ENCODE measurements at regions of chr16 and their contacts with region 1.

Region 1: DNA sequence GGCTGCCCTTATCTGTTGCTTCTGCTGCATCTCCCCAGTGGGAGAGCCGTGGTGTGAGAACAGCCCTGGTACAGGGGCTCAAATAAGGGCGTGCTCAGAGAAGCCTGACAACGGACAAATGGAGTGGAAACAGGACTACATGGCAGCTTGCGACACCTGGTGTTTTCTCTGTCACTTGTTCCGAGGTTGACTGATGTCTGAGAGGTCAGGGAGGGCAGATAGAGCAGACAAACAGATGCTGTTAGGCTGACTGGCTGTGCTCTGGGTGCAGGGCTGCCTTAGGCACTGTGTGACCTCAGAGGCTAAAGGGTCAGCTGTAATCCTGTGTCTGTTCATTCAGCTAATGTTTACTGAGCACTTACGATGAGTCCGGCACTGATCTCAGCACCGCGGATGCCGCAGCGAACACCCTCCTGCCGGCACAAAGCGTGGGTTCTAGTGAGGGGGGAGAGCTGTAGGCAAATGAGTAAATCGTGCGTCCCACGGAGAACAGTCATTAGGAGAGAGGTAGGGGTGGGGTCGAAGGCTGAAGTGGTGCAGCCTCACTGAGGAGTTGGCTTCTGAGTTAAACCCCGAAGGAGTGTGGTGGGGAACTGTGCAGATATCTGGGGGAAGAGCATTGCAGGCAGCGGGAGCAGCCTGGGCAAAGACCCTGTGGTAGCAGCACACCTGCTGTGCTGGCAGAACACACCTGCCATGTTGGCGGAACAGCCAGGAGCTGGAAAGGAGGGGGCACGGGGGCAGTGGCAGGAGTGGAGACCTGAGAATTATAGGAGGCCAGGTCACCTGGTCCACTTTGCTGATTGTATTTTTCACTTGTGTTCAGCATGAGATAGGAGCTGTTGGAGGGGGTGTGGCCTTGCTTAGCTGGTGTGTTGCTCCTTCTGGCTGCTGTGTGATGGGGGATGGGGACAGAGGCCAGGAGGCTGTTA is 35.0 kb downstream of the GPT2 start:
- DNase-seq: peak; percentile 34
- ATAC-seq: peak; percentile 60
- H3K4me3 Mint-ChIP-seq: peak overlapping the region; percentile 75
- H3K27ac Mint-ChIP-seq: peak overlapping the region; percentile 80
- H3K4me1 Mint-ChIP-seq: peaks cover 69% of the 10 kb centered on the region
- H3K27me3 Mint-ChIP-seq: no peaks in the 10 kb centered on the region
- CTCF ChIP-seq: no peak

Region 2: DNA sequence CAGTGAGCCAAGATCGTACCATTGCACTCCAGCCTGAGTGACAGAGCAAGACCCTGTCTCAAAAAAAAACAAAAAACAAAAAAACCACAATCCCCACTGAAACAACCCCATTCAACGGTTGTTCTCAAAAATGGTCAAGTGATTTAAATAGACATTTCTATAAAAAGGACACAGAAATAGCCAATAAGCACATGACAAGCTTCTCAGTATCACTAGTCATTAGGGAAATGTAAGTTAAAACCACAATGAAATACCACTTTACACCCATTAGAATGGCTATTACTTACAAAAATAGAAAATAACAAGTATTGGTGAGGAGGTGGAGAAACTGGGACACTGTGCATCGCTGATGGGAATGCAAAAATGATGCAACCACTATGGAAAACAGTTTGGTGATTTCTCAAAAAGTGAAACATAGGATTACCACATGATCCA is 144.4 kb before region 1 on chr16:
- CTCF ChIA-PET with region 1: no interaction called
- POLR2A ChIA-PET with region 1: no interaction called
- intact Hi-C with region 1: no loop called
- DNase-seq: no peak
- ATAC-seq: no peak
- H3K4me3 Mint-ChIP-seq: no peak overlapping the region
- H3K27ac Mint-ChIP-seq: no peak overlapping the region
- H3K4me1 Mint-ChIP-seq: peaks cover 16% of the 10 kb centered on the region
- H3K27me3 Mint-ChIP-seq: no peaks in the 10 kb centered on the region
- CTCF ChIP-seq: no peak

Region 3: GRCh38 chr16:46853713-46854443 is 65.2 kb before region 1 on chr16:
- CTCF ChIA-PET with region 1: interaction called, 66 read pairs
- POLR2A ChIA-PET with region 1: no interaction called
- intact Hi-C with region 1: loop called (anchors 1 kb)
- DNase-seq: peak; percentile 53
- ATAC-seq: peak; percentile 72
- H3K4me3 Mint-ChIP-seq: no peak overlapping the region
- H3K27ac Mint-ChIP-seq: no peak overlapping the region
- H3K4me1 Mint-ChIP-seq: peaks cover 17% of the 10 kb centered on the region
- H3K27me3 Mint-ChIP-seq: no peaks in the 10 kb centered on the region
- CTCF ChIP-seq: peak; percentile 63

Region 4: DNA sequence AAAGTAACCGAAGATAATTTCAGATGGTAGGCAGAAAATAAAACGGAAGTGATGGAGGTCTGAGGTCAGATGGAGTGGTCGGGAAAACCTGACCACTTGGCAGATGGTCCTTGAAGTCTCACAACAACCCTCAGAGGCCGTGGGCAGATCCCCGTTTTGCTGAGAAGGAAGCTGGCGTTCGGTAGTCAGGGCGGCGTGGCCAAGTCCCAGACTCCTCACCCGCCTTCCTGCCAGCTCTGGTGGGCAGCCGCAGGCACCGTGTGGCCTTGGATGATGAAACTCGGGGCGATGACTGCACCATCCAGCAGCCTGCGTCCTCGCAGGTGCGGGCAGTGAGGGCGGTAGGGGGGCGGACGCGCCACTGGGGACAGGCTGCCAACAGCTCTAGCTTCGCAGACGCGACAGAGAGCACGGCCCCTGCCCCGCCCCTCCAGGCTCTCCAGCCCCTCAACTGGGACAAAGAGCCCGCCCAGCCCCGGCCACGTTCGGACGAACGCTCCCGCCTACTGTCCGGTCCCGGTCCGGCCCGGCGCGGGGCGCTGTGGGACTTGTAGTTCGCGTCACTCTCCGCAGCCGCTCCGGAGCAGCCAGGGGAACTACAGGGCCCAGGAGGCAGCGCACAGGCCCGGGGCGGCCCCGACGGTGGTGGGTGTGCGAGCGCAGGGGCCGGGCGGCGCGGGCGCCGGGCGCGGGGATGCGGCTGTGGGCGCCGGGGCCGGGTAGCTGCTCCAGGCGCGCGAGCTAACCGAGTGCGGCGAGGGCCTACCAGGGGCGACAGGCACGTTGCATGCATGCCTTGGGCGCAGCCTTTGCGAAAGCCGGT is 35.2 kb before region 1 on chr16 and contains the start of gene GPT2:
- CTCF ChIA-PET with region 1: interaction called, 9 read pairs
- POLR2A ChIA-PET with region 1: interaction called, 5 read pairs
- intact Hi-C with region 1: loop called (anchors 1 kb)
- DNase-seq: peak; percentile 85
- ATAC-seq: peak; percentile 95
- H3K4me3 Mint-ChIP-seq: peak within 1 kb of the TSS; percentile 89
- H3K27ac Mint-ChIP-seq: peak within 1 kb of the TSS; percentile 85
- H3K4me1 Mint-ChIP-seq: peaks cover 11% of the 10 kb centered on the region
- H3K27me3 Mint-ChIP-seq: peaks cover 2% of the 10 kb centered on the region
- CTCF ChIP-seq: no peak
- total RNA-seq, gene GPT2: 11.7 and 17.4 TPM in 2 replicates

Region 5: DNA sequence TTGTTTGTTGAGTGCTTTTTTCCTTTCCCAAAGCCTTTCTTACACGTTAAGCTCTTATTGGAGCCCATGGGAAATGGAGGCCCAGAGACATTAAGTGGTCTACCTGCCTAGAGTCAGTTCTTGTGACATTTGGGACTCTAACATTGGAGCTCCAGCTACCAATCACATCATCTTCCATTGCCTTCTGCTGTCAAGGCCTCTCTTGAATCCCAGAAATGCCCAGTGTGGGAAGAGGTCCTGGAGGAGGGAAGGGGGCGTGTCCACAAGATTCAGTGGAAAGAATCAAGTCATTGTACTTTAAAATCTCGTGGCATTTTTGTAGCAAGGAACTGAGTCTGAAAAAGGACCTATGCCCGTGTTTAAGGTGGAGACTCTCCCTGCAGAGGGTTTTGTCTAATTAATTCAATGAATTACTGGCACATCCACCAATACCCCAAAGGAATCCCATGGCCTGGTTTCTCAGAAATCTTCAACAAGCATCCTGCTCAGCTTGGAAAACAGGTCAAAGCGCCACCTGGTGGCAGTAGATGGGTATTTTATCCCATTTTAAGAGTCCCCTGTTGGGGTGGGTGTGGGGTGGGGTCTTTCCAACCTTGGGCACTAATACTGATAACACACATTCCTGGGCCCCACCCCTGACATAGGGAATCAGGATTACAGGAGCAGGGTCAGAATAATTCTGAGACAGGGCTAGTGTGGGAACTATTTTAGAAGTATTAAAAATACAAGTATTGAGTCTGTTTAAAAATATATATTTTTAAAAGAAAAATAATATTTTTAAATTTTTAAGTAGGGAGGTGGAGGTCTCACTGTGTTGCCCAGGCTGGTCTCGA is 10.4 kb before region 1 on chr16:
- CTCF ChIA-PET with region 1: interaction called, 17 read pairs
- POLR2A ChIA-PET with region 1: interaction called, 9 read pairs
- intact Hi-C with region 1: loop called (anchors 1 kb)
- DNase-seq: peak; percentile 33
- ATAC-seq: peak; percentile 30
- H3K4me3 Mint-ChIP-seq: no peak overlapping the region
- H3K27ac Mint-ChIP-seq: no peak overlapping the region
- H3K4me1 Mint-ChIP-seq: peaks cover 56% of the 10 kb centered on the region
- H3K27me3 Mint-ChIP-seq: no peaks in the 10 kb centered on the region
- CTCF ChIP-seq: peak; percentile 77

Region 6: DNA sequence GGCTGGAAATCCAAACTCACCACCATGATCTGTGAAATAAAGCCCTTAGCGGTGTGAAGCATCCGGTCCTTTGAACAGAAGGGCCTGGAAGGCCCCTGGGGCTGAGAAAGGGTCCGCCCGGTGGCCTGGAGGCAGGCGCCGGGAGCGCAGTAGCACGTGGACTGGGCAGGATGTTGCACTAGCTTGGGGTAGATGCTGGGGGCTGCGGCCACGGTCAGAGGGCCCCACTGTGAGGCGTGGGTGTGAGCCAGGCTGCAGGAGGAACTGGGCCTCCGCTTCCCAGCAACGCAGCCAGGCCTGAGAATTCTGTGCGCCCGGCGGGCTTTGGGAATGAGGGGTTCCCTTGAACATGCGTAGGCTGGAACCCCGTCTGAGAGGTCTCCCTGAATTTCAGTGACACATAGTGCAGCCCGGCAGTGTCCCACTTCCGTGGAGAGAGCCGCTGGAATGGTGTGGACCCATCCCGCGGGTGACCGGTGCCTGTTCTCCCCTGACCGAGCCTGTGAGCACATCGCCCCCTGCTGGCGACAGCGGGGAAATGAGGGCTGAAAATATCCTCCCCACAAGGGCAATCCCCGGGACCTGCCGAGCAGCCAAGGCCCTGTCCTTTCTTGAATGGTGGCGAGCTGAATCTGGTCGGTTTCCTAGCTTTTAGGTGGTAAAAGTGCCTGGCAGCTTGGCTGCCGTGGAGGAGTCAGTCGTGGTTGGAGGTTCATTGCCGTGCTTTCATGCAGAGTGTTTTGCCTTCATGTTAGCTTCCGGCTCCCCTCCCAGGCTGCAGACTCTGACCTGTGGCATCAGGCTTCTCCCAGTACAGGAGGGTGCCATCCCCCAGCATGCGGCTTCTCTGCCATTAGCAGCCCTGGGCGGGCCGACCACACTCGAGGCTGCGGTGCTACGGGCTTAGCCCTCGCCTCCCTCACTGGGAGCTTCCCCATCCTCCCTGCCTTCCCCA is 10.5 kb after region 1 on chr16:
- CTCF ChIA-PET with region 1: interaction called, 5 read pairs
- POLR2A ChIA-PET with region 1: no interaction called
- intact Hi-C with region 1: loop called (anchors 1 kb)
- DNase-seq: peak; percentile 69
- ATAC-seq: peak; percentile 76
- H3K4me3 Mint-ChIP-seq: no peak overlapping the region
- H3K27ac Mint-ChIP-seq: no peak overlapping the region
- H3K4me1 Mint-ChIP-seq: peaks cover 12% of the 10 kb centered on the region
- H3K27me3 Mint-ChIP-seq: no peaks in the 10 kb centered on the region
- CTCF ChIP-seq: peak; percentile 59

Region 7: GRCh38 chr16:46973207-46973995 is 54.3 kb after region 1 on chr16 and contains the start of gene DNAJA2:
- CTCF ChIA-PET with region 1: no interaction called
- POLR2A ChIA-PET with region 1: interaction called, 3 read pairs
- intact Hi-C with region 1: loop called (anchors 2 kb)
- DNase-seq: peak; percentile 94
- ATAC-seq: peak; percentile 93
- H3K4me3 Mint-ChIP-seq: peak within 1 kb of the TSS; percentile 95
- H3K27ac Mint-ChIP-seq: peak within 1 kb of the TSS; percentile 98
- H3K4me1 Mint-ChIP-seq: peaks cover 44% of the 10 kb centered on the region
- H3K27me3 Mint-ChIP-seq: no peaks in the 10 kb centered on the region
- CTCF ChIP-seq: no peak
- total RNA-seq, gene DNAJA2: 54.4 and 57.1 TPM in 2 replicates